ENCODE measurements at regions of chr3 and their contacts with region 1.

Region 1: GRCh38 chr3:129052675-129053074 is 7.9 kb upstream of the GP9 start:
- DNase-seq: no peak
- H3K4me3 Mint-ChIP-seq: no peak overlapping the region
- H3K27ac Mint-ChIP-seq: no peak overlapping the region
- H3K4me1 Mint-ChIP-seq: peaks cover 10% of the 10 kb centered on the region
- H3K27me3 Mint-ChIP-seq: peaks cover 24% of the 10 kb centered on the region

Region 2: GRCh38 chr3:129016356-129016719 is 36.3 kb before region 1 on chr3:
- CTCF ChIA-PET with region 1: interaction called, 14 read pairs
- DNase-seq: peak; percentile 77
- H3K4me3 Mint-ChIP-seq: peak overlapping the region; percentile 64
- H3K27ac Mint-ChIP-seq: peak overlapping the region; percentile 93
- H3K4me1 Mint-ChIP-seq: peaks cover 47% of the 10 kb centered on the region
- H3K27me3 Mint-ChIP-seq: peaks cover 3% of the 10 kb centered on the region

Region 3: DNA sequence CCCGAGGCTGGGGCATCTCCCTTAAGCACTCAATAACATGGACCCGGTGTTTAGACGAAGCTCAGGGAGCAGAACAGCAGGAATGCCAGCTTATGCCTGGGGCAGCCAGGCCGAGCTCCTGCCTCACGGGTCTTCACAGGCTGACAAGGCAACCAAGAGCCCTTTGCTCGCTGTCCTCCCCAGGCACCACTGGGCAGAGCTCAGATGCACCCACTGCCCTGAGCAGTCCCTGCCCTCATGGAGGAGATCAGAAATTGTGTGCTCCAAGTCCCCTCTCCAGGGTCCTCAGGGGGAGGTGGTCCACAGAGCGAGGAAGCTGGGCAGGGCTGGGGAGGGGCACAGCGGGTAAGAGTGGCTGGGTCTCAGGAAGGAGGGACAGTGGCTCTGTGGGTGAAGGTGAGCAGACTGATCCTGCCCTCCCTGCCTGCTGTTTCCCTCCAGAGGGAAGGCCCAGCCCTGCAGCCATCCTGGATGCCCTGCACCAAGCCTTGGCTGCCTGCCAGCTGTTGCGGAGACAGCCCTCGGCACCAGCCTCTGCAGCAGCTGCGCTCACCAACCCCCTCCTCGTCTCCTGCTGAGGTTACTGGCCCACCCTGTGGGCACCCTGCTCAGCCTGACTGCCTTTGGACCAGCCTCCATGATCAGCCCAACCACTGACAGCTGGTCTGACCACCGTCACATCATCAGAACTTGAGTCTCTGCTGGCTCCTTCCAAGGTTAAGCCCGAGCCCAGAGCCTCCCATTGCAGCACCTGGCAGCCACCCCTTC is 13.2 kb before region 1 on chr3:
- CTCF ChIA-PET with region 1: interaction called, 13 read pairs
- DNase-seq: no peak
- H3K4me3 Mint-ChIP-seq: no peak overlapping the region
- H3K27ac Mint-ChIP-seq: no peak overlapping the region
- H3K4me1 Mint-ChIP-seq: peaks cover 18% of the 10 kb centered on the region
- H3K27me3 Mint-ChIP-seq: peaks cover 60% of the 10 kb centered on the region

Region 4: DNA sequence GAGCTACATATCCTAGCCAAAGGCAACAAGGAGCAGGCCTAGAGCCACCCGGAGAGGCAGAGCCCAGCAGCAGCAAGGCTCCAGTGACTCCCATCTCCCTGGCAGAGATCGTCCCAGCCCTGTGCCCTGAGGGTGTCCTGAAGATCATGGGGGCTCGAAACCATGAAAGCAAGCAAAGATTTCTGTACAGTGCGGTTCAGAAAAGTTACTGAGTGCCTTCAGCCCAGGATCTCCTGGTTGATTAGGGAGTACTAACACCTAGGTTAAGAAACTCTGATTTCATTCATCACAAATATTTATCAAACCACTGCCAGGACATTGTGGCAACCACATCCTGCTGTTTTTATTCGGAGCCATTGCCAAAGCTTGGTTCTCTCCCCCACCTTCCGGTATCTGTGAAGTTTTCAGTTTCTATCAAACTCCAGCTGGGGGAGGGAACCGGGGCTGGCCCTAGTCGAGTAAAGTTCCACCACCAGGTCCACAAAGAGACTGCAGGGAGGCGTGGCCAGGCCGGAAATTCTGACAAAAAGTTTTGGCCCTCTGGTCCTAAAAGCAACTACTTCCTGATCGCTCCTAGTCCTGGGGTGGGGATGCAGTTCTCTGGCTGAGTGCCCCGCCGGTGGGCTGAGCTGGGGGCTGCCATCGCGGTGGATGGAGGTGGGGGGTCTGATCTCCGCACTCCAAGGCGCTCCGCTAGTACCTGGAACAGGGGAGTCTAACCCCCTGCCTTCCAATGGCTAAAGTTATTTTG is 67.8 kb after region 1 on chr3:
- CTCF ChIA-PET with region 1: interaction called, 60 read pairs
- DNase-seq: peak; percentile 98
- H3K4me3 Mint-ChIP-seq: peak overlapping the region; percentile 91
- H3K27ac Mint-ChIP-seq: peak overlapping the region; percentile 98
- H3K4me1 Mint-ChIP-seq: peaks cover 53% of the 10 kb centered on the region
- H3K27me3 Mint-ChIP-seq: no peaks in the 10 kb centered on the region

Region 5: GRCh38 chr3:129238945-129239706 is 186.5 kb after region 1 on chr3:
- CTCF ChIA-PET with region 1: interaction called, 78 read pairs
- DNase-seq: peak; percentile 71
- H3K4me3 Mint-ChIP-seq: peak overlapping the region; percentile 50
- H3K27ac Mint-ChIP-seq: peak overlapping the region; percentile 99
- H3K4me1 Mint-ChIP-seq: peaks cover 61% of the 10 kb centered on the region
- H3K27me3 Mint-ChIP-seq: no peaks in the 10 kb centered on the region

Measured in activated naive CD4-positive, alpha-beta T cell treated with anti-CD3 and anti-CD28 coated beads, Interleukin-2, amount 10 ng/mL, durations not matched to agents 7 days and 5 days (primary cell).